ENCODE measurements at regions of chr22 and their contacts with region 1.

Region 1: GRCh38 chr22:19844377-19845053 is 10.2 kb downstream of the GNB1L start:
- DNase-seq: peak in 7 of 9 donors; percentile 21 to 47 (median 41)
- ATAC-seq: peak; percentile 76
- H3K4me3 ChIP-seq: peak overlapping the region; percentile 9
- H3K4me3 Mint-ChIP-seq: peak overlapping the region; percentile 23 to 80 (median 76)
- H3K27ac ChIP-seq: peak overlapping the region; percentile 63
- H3K27ac Mint-ChIP-seq: peak overlapping the region; percentile 58 to 92 (median 86)
- H3K4me1 ChIP-seq: peaks cover 0 to 19% of the 10 kb centered on the region in 2 donors
- H3K4me1 Mint-ChIP-seq: peaks cover 6 to 51% (median 36%) of the 10 kb centered on the region in 7 donors
- H3K27me3 ChIP-seq: no peaks in the 10 kb centered on the region
- H3K27me3 Mint-ChIP-seq: no peaks in the 10 kb centered on the region

Region 2: GRCh38 chr22:19865141-19865829 is 20.8 kb after region 1 on chr22:
- CTCF ChIA-PET with region 1: no interaction called
- POLR2A ChIA-PET with region 1: interaction called, 3 read pairs
- intact Hi-C with region 1: loop called in 1 of 2 experiments (anchors 2 kb)
- DNase-seq: no peak
- ATAC-seq: no peak
- H3K4me3 ChIP-seq: no peak overlapping the region
- H3K4me3 Mint-ChIP-seq: no peak overlapping the region
- H3K27ac ChIP-seq: no peak overlapping the region
- H3K27ac Mint-ChIP-seq: peak overlapping the region in 1 of 9 donors; percentile 12
- H3K4me1 ChIP-seq: no peaks in the 10 kb centered on the region
- H3K4me1 Mint-ChIP-seq: peaks cover 0 to 21% (median 13%) of the 10 kb centered on the region in 7 donors
- H3K27me3 ChIP-seq: no peaks in the 10 kb centered on the region
- H3K27me3 Mint-ChIP-seq: peaks cover 0 to 15% (median 0%) of the 10 kb centered on the region in 5 donors

Region 3: DNA sequence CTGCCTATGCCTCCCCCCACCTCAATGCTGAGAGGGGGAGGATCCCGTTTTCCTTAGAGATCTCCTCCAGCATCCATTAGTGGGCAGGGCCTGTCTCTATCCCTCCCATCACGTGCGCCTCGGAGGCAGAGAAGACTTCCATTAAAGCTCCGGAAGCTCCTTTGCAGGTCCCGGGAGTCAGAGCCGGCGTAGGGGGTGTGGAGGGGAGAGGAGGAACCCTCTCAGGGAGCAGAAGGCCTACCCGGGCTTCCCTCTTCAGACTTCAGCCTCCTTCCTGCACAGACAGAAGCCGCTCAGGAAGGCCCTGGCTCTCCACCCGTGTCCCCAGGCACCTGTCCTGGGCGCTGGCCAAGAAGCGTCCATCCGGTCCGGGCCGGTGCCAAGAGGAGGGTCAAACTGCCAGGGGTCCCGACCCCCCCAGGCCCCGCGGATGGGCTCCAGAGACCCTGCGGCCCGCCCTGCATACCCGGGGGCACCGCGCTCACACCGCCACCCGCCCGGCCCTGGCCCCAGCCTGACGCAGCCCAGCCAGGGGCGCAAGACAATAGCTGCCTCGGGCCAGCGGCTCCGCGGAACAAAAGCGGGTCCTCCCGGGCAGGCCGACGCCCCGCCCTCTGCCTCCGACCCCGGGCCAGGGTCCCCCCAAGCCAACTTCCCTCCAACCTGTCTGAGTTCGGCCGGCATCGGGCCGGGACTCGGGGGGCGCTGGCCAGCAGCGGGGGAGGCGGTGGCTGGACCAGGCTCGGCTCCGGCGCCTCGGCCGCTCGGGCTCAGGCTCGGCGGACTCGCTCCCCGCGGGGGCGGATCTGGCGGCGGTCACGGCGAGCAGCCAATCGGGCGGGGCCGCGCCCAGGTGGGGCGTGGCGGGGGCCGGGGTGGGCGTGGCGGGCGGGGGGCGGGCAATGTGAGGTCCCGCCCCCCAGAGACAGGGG is 142.2 kb after region 1 on chr22:
- CTCF ChIA-PET with region 1: no interaction called
- POLR2A ChIA-PET with region 1: no interaction called
- intact Hi-C with region 1: no loop called
- DNase-seq: peak; percentile 26 to 83 (median 47)
- ATAC-seq: peak; percentile 95
- H3K4me3 ChIP-seq: peak overlapping the region; percentile 46
- H3K4me3 Mint-ChIP-seq: peak overlapping the region; percentile 47 to 82 (median 68)
- H3K27ac ChIP-seq: peak overlapping the region; percentile 51
- H3K27ac Mint-ChIP-seq: no peak overlapping the region
- H3K4me1 ChIP-seq: no peaks in the 10 kb centered on the region
- H3K4me1 Mint-ChIP-seq: peaks cover 0 to 3% (median 2%) of the 10 kb centered on the region in 7 donors
- H3K27me3 ChIP-seq: no peaks in the 10 kb centered on the region
- H3K27me3 Mint-ChIP-seq: peaks cover 0 to 7% (median 0%) of the 10 kb centered on the region in 5 donors